Activated CD4-positive, alpha-beta T cell treated with anti-CD3 and anti-CD28 coated beads, Interleukin-2, amount 10 ng/mL, durations not matched to agents 24 days and 14 days (primary cell): ENCODE measurements at regions of chr3 and their contacts with region 1.

Region 1: GRCh38 chr3:33131331-33132018 is 17.7 kb downstream of the CRTAP start:
- DNase-seq: peak; percentile 82
- H3K4me3 Mint-ChIP-seq: no peak overlapping the region
- H3K27ac Mint-ChIP-seq: no peak overlapping the region
- H3K4me1 Mint-ChIP-seq: peaks cover 6% of the 10 kb centered on the region
- H3K27me3 Mint-ChIP-seq: no peaks in the 10 kb centered on the region

Region 2: GRCh38 chr3:33184863-33185262 is 53.4 kb after region 1 on chr3:
- intact Hi-C with region 1: no loop called
- DNase-seq: peak; percentile 18
- H3K4me3 Mint-ChIP-seq: no peak overlapping the region
- H3K27ac Mint-ChIP-seq: no peak overlapping the region
- H3K4me1 Mint-ChIP-seq: no peaks in the 10 kb centered on the region
- H3K27me3 Mint-ChIP-seq: peaks cover 5% of the 10 kb centered on the region

Region 3: DNA sequence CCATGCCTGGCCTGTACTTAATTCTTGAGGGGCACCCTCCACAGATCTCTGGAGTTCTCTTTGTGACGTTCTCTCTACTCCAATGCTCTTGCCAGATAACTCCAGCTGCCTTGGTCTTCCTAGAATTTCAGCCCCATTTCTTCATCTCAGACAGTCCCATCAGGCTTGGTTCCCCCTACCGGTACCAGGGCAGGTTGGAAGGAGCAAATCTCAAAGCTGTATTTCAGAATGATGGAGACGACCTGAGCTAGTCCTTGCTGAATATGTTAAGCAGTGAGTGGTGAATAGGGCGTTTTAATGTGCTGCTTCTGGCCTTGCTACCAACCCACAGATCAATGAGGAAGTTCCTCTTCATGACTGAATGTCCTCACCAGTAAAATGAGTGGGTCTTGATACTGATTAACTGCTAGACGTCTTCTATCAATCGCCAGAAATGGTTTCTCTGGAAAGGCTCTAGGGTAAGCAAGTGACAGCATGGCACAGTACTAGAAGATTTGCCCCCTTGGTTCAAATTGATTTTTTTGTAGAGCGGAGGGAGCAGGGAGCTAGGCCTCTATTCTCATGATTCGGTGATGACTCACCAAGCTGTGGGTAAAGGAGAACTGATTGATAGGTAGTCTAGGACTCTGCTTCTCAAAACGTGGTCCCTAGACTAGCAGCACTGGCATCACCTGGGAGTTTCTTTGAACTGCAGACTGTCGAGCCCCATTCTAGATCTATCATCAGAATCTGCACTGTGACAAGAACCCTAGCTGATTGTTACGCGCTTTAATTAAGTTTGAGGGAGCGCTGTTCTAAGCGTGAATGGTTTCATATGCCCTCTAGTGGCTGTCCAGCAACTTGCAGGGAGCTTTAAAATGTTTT is 241.0 kb after region 1 on chr3:
- intact Hi-C with region 1: loop called (anchors 1 kb)
- DNase-seq: peak; percentile 82
- H3K4me3 Mint-ChIP-seq: no peak overlapping the region
- H3K27ac Mint-ChIP-seq: no peak overlapping the region
- H3K4me1 Mint-ChIP-seq: peaks cover 5% of the 10 kb centered on the region
- H3K27me3 Mint-ChIP-seq: peaks cover 7% of the 10 kb centered on the region